Mammary epithelial cell (primary cell): ENCODE measurements at regions of chr7 and their contacts with region 1.

Region 1: GRCh38 chr7:44735403-44736165 is 13.1 kb upstream of the ZMIZ2 start:
- DNase-seq: peak; percentile 97
- H3K4me3 ChIP-seq: no peak overlapping the region
- H3K27ac ChIP-seq: peak overlapping the region; percentile 91
- H3K4me1 ChIP-seq: peaks cover 18% of the 10 kb centered on the region
- H3K27me3 ChIP-seq: no peaks in the 10 kb centered on the region
- CTCF ChIP-seq: peak in 1 of 2 donors; percentile 3

Region 2: DNA sequence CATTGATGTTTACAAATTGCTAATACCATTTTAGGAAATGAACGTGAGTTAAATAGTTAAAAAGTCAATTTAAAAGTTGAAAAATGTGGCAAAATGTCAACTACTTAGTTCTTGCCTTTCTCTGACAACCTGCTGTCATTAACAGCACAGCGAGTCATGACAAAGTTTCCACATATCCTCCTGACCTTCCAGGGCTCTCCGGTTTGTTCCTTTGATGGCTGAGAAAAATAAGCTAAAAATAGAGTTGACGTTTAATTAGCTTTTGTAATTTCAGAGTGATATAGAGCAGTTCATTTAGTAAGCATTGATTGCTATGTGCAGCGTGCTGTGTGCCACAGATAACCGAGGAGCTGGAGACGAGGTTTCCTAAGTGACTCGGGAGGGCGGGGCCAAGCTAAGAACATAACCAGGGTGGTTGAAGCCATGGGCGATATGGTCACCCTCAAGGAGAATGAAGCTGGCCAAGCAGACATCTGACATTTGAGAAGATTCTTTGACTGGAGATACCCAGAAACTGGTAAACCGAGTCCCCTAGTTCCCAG is 81.3 kb before region 1 on chr7:
- CTCF ChIA-PET with region 1: no interaction called
- dilution Hi-C with region 1: no loop called
- in situ Hi-C with region 1: no loop called
- intact Hi-C with region 1: no loop called
- DNase-seq: no peak
- H3K4me3 ChIP-seq: no peak overlapping the region
- H3K27ac ChIP-seq: no peak overlapping the region
- H3K4me1 ChIP-seq: no peaks in the 10 kb centered on the region
- H3K27me3 ChIP-seq: no peaks in the 10 kb centered on the region
- CTCF ChIP-seq: no peak

Region 3: GRCh38 chr7:44791278-44792219 is 56.0 kb after region 1 on chr7:
- CTCF ChIA-PET with region 1: no interaction called
- dilution Hi-C with region 1: loop called (anchors 5 kb)
- in situ Hi-C with region 1: no loop called
- intact Hi-C with region 1: no loop called
- DNase-seq: no peak
- H3K4me3 ChIP-seq: no peak overlapping the region
- H3K27ac ChIP-seq: no peak overlapping the region
- H3K4me1 ChIP-seq: peaks cover 12% of the 10 kb centered on the region
- H3K27me3 ChIP-seq: no peaks in the 10 kb centered on the region
- CTCF ChIP-seq: peak in 1 of 2 donors; percentile 25